Activated B cell treated with CpG ODN at 0.5 μM for 24 hours (primary cell): ENCODE measurements at regions of chr3 and their contacts with region 1.

Region 1: DNA sequence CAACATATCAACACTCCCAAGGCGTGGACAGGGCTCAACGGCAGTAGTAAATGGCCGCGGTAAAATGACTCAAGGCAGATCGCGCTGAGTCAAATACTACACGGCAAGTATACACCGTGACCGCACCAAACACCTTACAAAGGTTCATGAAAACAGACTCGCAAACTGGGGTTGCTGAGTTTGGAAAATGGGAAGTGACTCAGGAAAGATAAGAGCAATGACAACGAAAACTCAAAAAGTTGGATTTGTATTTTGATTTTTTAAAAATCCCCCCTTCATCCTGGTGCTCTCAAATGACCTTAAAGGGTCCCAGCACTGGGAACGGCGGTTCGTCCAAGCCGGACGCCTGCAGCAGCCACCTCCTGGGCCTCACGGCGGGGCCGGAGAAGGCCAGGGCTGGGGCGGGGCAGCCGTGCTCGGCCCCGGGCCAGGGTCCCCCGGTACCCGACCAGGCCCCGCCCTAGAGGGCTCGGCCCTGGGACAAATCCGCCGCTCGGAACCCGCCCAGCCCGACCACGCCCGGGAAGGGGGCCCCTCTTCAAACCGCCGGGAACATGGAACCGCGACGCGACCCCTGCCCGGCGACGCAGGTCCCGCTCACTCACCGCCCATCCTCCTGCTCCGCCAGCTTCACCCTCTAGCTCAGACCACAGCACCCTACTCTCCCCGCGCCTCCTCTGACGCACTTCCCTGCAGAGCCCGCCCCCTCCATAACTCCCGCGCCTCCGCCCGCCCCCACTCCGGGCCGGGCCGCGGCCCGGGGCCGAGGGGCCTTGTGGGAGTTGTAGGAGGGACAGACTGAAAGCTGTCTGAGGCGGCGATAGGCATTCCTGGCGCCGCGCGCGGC is at the start of gene CLDND1:
- DNase-seq: peak; percentile 92
- ATAC-seq: peak; percentile 97
- H3K4me3 Mint-ChIP-seq: peak within 1 kb of the TSS; percentile 92
- H3K27ac Mint-ChIP-seq: peak within 1 kb of the TSS; percentile 87
- H3K4me1 Mint-ChIP-seq: peaks cover 40% of the 10 kb centered on the region
- H3K27me3 Mint-ChIP-seq: no peaks in the 10 kb centered on the region
- CTCF ChIP-seq: no peak
- total RNA-seq, gene CLDND1: 133 and 140 TPM in 2 replicates

Region 2: GRCh38 chr3:97821810-97822775 is 700.4 kb before region 1 on chr3 and contains the start of gene CRYBG3:
- CTCF ChIA-PET with region 1: no interaction called
- POLR2A ChIA-PET with region 1: interaction called, 4 read pairs
- intact Hi-C with region 1: loop called (anchors 1 kb)
- DNase-seq: peak; percentile 80
- ATAC-seq: peak; percentile 99
- H3K4me3 Mint-ChIP-seq: peak within 1 kb of the TSS; percentile 88
- H3K27ac Mint-ChIP-seq: peak within 1 kb of the TSS; percentile 47
- H3K4me1 Mint-ChIP-seq: peaks cover 21% of the 10 kb centered on the region
- H3K27me3 Mint-ChIP-seq: peaks cover 44% of the 10 kb centered on the region
- CTCF ChIP-seq: no peak
- total RNA-seq, gene CRYBG3: 1.5 TPM in 2 replicates

Region 3: GRCh38 chr3:98039322-98040024 is 483.0 kb before region 1 on chr3:
- CTCF ChIA-PET with region 1: interaction called, 3 read pairs
- POLR2A ChIA-PET with region 1: no interaction called
- intact Hi-C with region 1: loop called (anchors 2 kb)
- DNase-seq: peak; percentile 36
- ATAC-seq: peak; percentile 99
- H3K4me3 Mint-ChIP-seq: peak overlapping the region; percentile 80
- H3K27ac Mint-ChIP-seq: peak overlapping the region; percentile 41
- H3K4me1 Mint-ChIP-seq: peaks cover 5% of the 10 kb centered on the region
- H3K27me3 Mint-ChIP-seq: peaks cover 5% of the 10 kb centered on the region
- CTCF ChIP-seq: peak; percentile 60

Region 4: DNA sequence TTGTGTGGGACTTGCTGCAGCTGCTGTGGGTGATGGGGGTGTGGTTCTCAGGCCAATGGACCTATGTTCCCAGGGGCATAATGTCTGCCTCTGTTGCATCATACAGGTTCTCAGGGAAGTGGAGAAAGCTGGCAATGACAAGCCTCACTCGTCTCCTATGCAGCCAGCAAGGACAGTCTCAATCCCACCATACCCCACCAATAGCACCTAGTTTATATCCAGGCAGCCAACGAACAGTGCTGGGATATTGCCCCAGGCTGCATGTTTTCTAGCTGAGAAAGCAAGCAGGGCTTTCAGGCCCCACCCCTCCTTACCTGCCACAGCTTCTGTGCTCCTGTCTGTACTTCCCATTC is 39.4 kb before region 1 on chr3:
- CTCF ChIA-PET with region 1: no interaction called
- POLR2A ChIA-PET with region 1: no interaction called
- intact Hi-C with region 1: no loop called
- DNase-seq: no peak
- ATAC-seq: no peak
- H3K4me3 Mint-ChIP-seq: no peak overlapping the region
- H3K27ac Mint-ChIP-seq: no peak overlapping the region
- H3K4me1 Mint-ChIP-seq: no peaks in the 10 kb centered on the region
- H3K27me3 Mint-ChIP-seq: peaks cover 26% of the 10 kb centered on the region
- CTCF ChIP-seq: no peak

Region 5: DNA sequence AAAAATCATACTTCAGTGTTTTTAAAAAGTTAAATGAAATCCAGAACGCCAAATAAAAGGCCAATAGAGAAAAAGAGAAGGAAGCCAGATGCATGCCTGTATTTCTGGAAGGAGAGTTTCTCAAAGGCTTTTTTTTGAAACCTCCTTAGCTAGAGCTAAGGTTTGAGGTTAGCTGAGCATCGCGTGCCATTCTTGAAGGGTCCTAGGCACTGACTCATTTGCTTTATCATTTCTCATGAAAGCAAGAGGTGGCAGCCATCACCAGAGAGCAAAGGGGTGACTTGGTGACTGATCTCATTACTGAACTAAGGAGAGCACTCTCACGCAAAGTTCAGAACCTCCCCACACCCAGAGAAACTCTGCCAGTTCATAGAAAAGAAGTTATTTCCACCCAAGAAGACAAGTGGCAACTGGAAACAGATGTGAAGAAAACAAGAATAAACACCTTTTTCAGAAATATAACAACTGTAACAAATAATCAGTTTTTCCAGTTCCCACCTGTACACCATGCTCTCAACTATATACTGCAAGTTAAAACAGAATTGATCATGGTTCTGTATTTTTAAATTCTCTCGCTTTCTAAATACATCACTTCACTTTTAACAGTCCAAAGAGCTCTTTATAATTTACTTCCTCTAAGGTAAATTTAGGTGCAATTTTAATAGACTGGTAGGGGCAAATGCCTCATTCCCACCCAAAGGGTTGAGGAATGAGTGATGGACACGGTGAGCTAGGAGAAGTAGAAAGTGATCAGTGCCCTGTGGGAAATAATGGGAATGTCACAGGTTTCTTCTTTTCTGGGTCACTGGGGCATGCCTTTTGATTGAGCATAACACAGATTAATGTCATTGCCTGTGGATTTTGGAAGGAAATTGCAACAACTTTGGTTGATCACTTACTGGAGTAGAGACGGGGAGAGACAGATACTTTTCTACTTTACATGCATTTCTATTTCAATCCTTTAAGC is 34.0 kb after region 1 on chr3:
- CTCF ChIA-PET with region 1: no interaction called
- POLR2A ChIA-PET with region 1: interaction called, 13 read pairs
- intact Hi-C with region 1: loop called (anchors 1 kb)
- DNase-seq: no peak
- ATAC-seq: peak; percentile 76
- H3K4me3 Mint-ChIP-seq: peak overlapping the region; percentile 42
- H3K27ac Mint-ChIP-seq: peak overlapping the region; percentile 80
- H3K4me1 Mint-ChIP-seq: peaks cover 56% of the 10 kb centered on the region
- H3K27me3 Mint-ChIP-seq: peaks cover 2% of the 10 kb centered on the region
- CTCF ChIP-seq: no peak

Region 6: DNA sequence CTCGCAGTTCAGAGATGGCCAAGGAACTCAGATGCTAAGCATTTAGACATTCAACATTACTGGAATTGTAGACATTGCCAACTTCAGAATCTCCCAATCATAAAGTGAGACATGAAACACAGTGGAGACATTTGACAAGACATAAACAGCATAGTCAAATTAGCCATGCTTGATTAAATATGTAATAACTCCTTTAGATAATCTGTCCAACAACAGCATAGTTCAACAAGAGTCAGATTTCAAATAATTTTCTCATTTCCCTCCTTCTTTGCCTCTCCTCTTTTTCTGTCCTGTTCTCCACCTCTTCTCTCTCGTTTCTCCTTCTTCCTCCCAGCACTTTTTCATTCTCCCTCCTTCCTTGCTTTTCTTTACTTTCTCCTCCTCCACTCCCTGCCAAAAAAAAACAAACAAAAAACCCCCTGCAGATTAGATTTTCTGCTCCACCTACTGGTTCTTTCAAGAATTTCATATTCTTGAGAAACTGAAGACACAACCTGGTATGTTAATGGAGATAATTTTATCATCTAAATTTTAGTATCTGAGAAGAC is 50.8 kb after region 1 on chr3:
- CTCF ChIA-PET with region 1: no interaction called
- POLR2A ChIA-PET with region 1: interaction called, 5 read pairs
- intact Hi-C with region 1: loop called (anchors 1 kb)
- DNase-seq: no peak
- ATAC-seq: peak; percentile 40
- H3K4me3 Mint-ChIP-seq: peak overlapping the region; percentile 21
- H3K27ac Mint-ChIP-seq: peak overlapping the region; percentile 74
- H3K4me1 Mint-ChIP-seq: peaks cover 6% of the 10 kb centered on the region
- H3K27me3 Mint-ChIP-seq: no peaks in the 10 kb centered on the region
- CTCF ChIP-seq: no peak

Region 7: GRCh38 chr3:98901392-98902350 is 379.2 kb after region 1 on chr3 and contains the start of gene DCBLD2:
- CTCF ChIA-PET with region 1: no interaction called
- POLR2A ChIA-PET with region 1: interaction called, 5 read pairs
- intact Hi-C with region 1: loop called (anchors 1 kb)
- DNase-seq: peak; percentile 86
- ATAC-seq: peak; percentile 98
- H3K4me3 Mint-ChIP-seq: peak within 1 kb of the TSS; percentile 88
- H3K27ac Mint-ChIP-seq: peak within 1 kb of the TSS; percentile 73
- H3K4me1 Mint-ChIP-seq: peaks cover 19% of the 10 kb centered on the region
- H3K27me3 Mint-ChIP-seq: peaks cover 12% of the 10 kb centered on the region
- CTCF ChIP-seq: no peak
- total RNA-seq, gene DCBLD2: 0.95 and 1.8 TPM in 2 replicates

Region 8: GRCh38 chr3:100260685-100261484 is 1738.4 kb after region 1 on chr3 and contains the start of gene TBC1D23:
- CTCF ChIA-PET with region 1: no interaction called
- POLR2A ChIA-PET with region 1: no interaction called
- intact Hi-C with region 1: loop called (anchors 1 kb)
- DNase-seq: peak; percentile 93
- ATAC-seq: peak; percentile 100
- H3K4me3 Mint-ChIP-seq: peak within 1 kb of the TSS; percentile 93
- H3K27ac Mint-ChIP-seq: peak within 1 kb of the TSS; percentile 96
- H3K4me1 Mint-ChIP-seq: peaks cover 43% of the 10 kb centered on the region
- H3K27me3 Mint-ChIP-seq: no peaks in the 10 kb centered on the region
- CTCF ChIP-seq: no peak
- total RNA-seq, gene TBC1D23: 27.2 and 27.7 TPM in 2 replicates